SK-N-SH (cell line): ENCODE measurements at regions of chr12 and their contacts with region 1.

Region 1: DNA sequence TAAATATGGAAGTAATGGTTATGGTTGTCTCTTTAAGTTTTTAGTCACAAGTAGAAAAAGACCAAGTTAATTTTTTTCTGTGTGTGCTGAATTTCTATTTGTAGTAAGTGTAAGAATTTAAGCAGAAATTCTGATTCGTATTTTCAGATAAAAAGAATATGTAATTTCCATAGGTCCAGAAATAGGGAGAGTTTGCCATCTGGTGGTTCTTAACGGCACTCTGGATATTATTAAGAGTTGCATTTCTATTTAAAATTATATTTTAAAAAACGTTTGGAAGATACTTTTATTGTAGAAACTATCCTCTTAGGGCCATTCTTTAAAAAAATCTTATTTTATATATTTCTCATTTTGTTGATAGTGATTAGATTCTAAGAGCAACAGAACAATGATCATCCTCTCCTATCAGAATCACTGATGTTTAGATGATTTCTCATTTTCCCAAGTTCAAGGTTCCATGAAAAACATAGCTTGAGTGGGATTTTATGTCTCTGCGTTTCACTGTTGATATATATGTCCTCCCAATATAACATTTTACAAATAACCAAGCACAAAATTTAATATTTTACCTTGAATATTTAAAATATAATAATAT is 88.3 kb downstream of the LRRK2 start:
- DNase-seq: peak; percentile 14
- H3K4me3 ChIP-seq: no peak overlapping the region
- H3K27ac ChIP-seq: no peak overlapping the region
- H3K4me1 ChIP-seq: no peaks in the 10 kb centered on the region
- H3K27me3 ChIP-seq: no peaks in the 10 kb centered on the region
- CTCF ChIP-seq: peak; percentile 60
- EP300 ChIP-seq: no peak
- RAD21 ChIP-seq: peak; percentile 79

Region 2: DNA sequence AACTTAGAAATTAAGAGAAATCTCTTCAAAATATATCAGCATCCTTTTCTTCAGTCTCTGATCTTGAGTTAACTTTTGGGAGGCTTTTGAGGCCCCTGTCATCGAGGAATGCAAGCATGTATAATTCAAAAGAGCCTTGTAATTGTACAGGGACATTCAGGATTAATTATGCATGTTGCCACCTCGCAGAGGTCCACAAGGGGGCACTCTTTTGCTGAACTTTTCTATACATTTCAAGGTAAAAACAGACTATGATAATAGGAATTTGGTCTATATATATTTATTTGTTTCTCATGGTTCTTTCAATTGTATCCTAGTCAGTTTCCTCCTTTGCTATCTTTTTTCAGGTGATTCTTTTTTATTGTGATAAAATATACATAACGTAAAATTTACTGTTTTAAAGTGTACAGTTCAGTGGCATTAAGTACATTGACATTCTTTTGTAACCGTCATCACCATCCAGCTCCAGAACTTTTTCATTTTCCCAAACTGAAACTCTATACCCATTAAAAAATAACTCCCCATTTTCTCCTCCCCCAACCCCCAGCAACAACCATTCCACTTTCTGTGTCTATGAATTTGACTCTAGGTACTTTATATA is 160.2 kb before region 1 on chr12:
- CTCF ChIA-PET with region 1: interaction called, 46 read pairs
- POLR2A ChIA-PET with region 1: no interaction called
- DNase-seq: peak; percentile 14
- H3K4me3 ChIP-seq: no peak overlapping the region; a peak in 1 of 4 replicates
- H3K27ac ChIP-seq: no peak overlapping the region
- H3K4me1 ChIP-seq: no peaks in the 10 kb centered on the region
- H3K27me3 ChIP-seq: no peaks in the 10 kb centered on the region
- CTCF ChIP-seq: peak; percentile 96
- EP300 ChIP-seq: no peak
- RAD21 ChIP-seq: peak; percentile 80

Region 3: GRCh38 chr12:40292788-40293429 is 20.2 kb before region 1 on chr12:
- CTCF ChIA-PET with region 1: no interaction called
- POLR2A ChIA-PET with region 1: no interaction called
- DNase-seq: no peak
- H3K4me3 ChIP-seq: no peak overlapping the region
- H3K27ac ChIP-seq: no peak overlapping the region
- H3K4me1 ChIP-seq: no peaks in the 10 kb centered on the region
- H3K27me3 ChIP-seq: no peaks in the 10 kb centered on the region
- CTCF ChIP-seq: no peak
- EP300 ChIP-seq: no peak
- RAD21 ChIP-seq: no peak